Naive thymus-derived CD4-positive, alpha-beta T cell (primary cell): ENCODE measurements at regions of chr7 and their contacts with region 1.

Region 1: GRCh38 chr7:99558306-99559174 is at the start of gene ZNF655:
- DNase-seq: peak; percentile 85 to 96 (median 93)
- ATAC-seq: peak; percentile 89
- H3K4me3 ChIP-seq: peak within 1 kb of the TSS; percentile 85
- H3K4me3 Mint-ChIP-seq: peak within 1 kb of the TSS; percentile 94 to 100 (median 97)
- H3K27ac ChIP-seq: peak within 1 kb of the TSS; percentile 99
- H3K27ac Mint-ChIP-seq: peak within 1 kb of the TSS; percentile 95 to 100 (median 99)
- H3K4me1 ChIP-seq: peaks cover 24 to 25% of the 10 kb centered on the region in 2 donors
- H3K4me1 Mint-ChIP-seq: peaks cover 32 to 69% (median 51%) of the 10 kb centered on the region in 7 donors
- H3K27me3 ChIP-seq: no peaks in the 10 kb centered on the region
- H3K27me3 Mint-ChIP-seq: no peaks in the 10 kb centered on the region
- total RNA-seq, gene ZNF655: 110 to 165 (median 157) TPM

Region 2: DNA sequence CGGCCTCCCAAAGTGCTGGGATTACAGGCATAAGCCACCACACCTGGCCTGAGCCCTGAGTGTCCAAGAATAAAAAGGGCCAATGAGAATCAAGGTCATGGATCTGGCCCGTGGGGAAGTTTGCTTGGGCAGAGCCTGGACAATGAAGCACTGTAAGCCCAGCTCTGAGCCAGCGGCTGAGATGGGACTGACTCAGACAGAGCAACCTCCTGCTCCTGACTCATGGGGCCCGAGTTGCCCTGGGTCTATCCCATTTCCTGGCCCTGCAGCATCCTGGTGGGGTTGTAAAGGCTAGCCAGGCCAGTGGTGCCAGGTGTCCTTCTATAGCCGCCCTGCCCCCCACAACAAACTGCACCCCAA is 291.1 kb before region 1 on chr7:
- CTCF ChIA-PET with region 1: no interaction called
- POLR2A ChIA-PET with region 1: no interaction called
- intact Hi-C with region 1: no loop called
- DNase-seq: no peak
- ATAC-seq: no peak
- H3K4me3 ChIP-seq: no peak overlapping the region
- H3K4me3 Mint-ChIP-seq: no peak overlapping the region
- H3K27ac ChIP-seq: no peak overlapping the region
- H3K27ac Mint-ChIP-seq: no peak overlapping the region
- H3K4me1 ChIP-seq: no peaks in the 10 kb centered on the region
- H3K4me1 Mint-ChIP-seq: no peaks in the 10 kb centered on the region
- H3K27me3 ChIP-seq: no peaks in the 10 kb centered on the region
- H3K27me3 Mint-ChIP-seq: peaks cover 0 to 9% (median 5%) of the 10 kb centered on the region in 5 donors

Region 3: DNA sequence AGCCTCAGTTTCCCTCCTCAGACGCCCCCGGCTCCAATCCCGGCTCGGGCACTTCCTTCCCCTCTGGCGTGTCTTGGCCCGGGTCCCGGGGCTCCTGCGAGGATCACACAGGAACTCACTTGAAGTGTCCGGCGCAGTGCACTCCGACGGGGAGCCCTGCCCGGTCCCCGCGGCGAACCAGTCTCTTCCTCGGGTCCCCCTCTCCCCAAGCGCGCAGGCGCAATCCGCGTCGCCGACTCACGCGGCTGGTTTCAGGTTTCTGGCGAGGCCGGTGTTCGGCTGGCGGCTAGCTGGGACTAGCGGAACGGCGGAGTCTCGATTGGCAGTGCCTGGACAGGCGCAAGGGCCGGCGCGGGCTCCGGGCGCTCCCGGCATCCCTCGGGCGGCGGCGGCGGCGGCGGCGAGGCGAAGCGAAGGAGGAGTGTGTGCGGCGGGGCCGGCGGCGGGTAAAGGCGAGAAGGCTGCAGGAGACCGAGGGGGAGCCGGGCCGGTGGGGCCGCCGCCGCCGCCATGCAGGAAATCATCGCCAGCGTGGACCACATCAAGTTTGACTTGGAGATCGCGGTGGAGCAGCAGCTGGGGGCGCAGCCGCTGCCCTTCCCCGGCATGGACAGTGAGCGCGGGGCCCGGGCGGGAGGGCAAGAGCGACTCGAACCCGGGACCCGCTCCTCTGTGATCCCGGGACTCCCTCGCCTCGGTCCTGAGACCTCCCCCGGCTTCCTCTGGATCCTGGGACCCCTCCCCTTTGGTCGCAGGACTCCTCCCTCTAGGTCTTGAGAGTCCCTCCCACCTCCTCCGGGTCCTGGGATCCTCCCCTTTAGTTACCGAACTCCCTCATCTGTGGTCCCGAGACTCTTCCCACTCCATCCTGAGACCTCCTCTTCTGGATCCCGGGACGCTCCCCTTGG is 119.7 kb before region 1 on chr7 and contains the starts of genes CPSF4 and PTCD1:
- CTCF ChIA-PET with region 1: no interaction called
- POLR2A ChIA-PET with region 1: interaction called, 4 read pairs
- intact Hi-C with region 1: loop called in 1 of 2 experiments (anchors 1 kb)
- DNase-seq: peak; percentile 71 to 92 (median 77)
- ATAC-seq: peak; percentile 95
- H3K4me3 ChIP-seq: peak within 1 kb of the TSS; percentile 93
- H3K4me3 Mint-ChIP-seq: peak within 1 kb of the TSS; percentile 92 to 100 (median 98)
- H3K27ac ChIP-seq: peak within 1 kb of the TSS; percentile 81
- H3K27ac Mint-ChIP-seq: peak within 1 kb of the TSS; percentile 85 to 95 (median 94)
- H3K4me1 ChIP-seq: peaks cover 10 to 11% of the 10 kb centered on the region in 2 donors
- H3K4me1 Mint-ChIP-seq: peaks cover 18 to 40% (median 31%) of the 10 kb centered on the region in 7 donors
- H3K27me3 ChIP-seq: no peaks in the 10 kb centered on the region
- H3K27me3 Mint-ChIP-seq: no peaks in the 10 kb centered on the region
- total RNA-seq, gene CPSF4: 36.3 to 69.4 (median 45.7) TPM
- total RNA-seq, gene PTCD1: 4.0 to 10.8 (median 8.8) TPM

Region 4: DNA sequence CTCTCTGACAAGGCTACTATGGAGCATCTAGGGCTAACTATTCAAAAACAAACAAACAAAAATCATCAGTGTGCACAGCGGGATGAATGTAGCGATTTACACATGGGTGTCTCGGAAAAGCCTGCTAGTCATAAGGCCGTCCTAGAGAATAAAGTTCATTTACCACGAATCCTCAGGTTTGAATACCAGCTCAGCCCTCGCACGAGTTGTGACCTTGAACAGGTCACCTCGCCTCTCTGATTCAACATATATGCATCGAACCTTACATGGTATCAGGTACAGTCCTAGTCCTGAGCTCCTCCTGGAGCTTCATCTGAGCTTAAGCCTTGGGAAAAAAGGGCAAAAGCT is 93.1 kb before region 1 on chr7:
- CTCF ChIA-PET with region 1: no interaction called
- POLR2A ChIA-PET with region 1: interaction called, 12 read pairs
- intact Hi-C with region 1: no loop called
- DNase-seq: no peak
- ATAC-seq: peak; percentile 2
- H3K4me3 ChIP-seq: peak overlapping the region; percentile 97
- H3K4me3 Mint-ChIP-seq: peak overlapping the region; percentile 82 to 98 (median 96)
- H3K27ac ChIP-seq: peak overlapping the region; percentile 90
- H3K27ac Mint-ChIP-seq: peak overlapping the region; percentile 90 to 98 (median 96)
- H3K4me1 ChIP-seq: peaks cover 10 to 11% of the 10 kb centered on the region in 2 donors
- H3K4me1 Mint-ChIP-seq: peaks cover 19 to 52% (median 31%) of the 10 kb centered on the region in 7 donors
- H3K27me3 ChIP-seq: no peaks in the 10 kb centered on the region
- H3K27me3 Mint-ChIP-seq: peaks cover 0 to 2% (median 0%) of the 10 kb centered on the region in 5 donors

Region 5: DNA sequence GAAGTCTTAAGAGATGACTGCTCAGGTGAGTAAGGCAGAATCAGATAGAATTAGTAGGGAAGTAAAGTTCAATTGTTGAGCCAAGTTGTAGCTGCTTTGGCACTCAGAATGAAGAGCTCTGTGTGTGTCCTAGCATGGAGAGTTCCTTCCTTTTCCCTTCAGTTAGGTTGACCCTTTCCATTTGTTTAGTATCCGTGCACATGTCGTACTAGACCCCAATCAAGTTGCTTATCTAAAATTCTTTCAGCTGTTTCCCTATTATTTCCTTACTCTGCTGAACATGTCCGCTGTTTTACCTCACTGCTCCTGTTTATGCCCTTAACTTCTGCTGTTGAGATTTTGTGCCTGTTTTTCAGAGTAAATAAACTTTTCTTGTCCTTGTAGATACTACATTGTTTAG is 13.2 kb after region 1 on chr7:
- CTCF ChIA-PET with region 1: no interaction called
- POLR2A ChIA-PET with region 1: interaction called, 10 read pairs
- intact Hi-C with region 1: no loop called
- DNase-seq: no peak
- ATAC-seq: no peak
- H3K4me3 ChIP-seq: no peak overlapping the region
- H3K4me3 Mint-ChIP-seq: no peak overlapping the region
- H3K27ac ChIP-seq: no peak overlapping the region
- H3K27ac Mint-ChIP-seq: peak overlapping the region in 6 of 9 donors; percentile 13 to 71 (median 59)
- H3K4me1 ChIP-seq: no peaks in the 10 kb centered on the region
- H3K4me1 Mint-ChIP-seq: peaks cover 0 to 10% (median 6%) of the 10 kb centered on the region in 7 donors
- H3K27me3 ChIP-seq: no peaks in the 10 kb centered on the region
- H3K27me3 Mint-ChIP-seq: no peaks in the 10 kb centered on the region

Region 6: DNA sequence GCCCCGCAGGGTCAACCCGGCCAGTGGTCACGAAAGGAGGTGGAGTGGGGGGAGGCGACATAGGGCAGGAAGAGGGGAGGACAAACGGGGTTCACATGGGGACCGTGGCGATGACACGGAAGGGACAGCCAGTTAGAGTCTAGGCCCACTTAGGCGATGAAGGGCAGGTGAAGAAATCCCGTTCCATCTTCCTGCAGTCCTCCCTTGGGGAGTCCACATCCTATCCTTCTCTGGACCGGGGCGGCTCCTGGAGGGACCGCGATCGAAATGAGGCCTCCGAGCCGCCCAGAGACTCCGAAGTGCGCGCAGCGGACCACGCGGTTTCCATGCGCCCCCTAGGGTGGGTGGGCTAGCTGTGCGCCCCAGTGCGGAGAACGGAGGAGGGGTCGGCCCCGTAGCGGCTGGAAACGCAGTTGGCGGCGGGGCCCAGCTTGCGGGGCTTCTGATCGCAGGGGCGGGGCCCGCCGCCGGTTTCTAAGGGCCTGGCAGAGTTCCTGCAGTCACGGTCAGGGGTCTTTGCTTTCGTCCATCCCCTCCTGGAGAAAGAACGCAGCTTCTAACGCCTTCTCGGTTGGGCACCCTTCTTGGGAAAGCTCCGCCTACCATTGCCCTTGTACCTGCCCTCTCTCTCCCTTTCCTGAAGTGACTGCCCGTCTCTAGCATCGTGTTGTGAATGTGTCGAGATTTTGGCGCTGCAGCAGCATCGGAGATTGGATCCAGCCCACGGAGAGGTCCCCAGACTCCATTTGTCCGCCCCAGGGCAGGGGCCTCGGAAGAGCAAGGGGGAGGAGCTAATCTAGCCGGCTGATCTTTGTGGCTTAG is 21.6 kb after region 1 on chr7:
- CTCF ChIA-PET with region 1: interaction called, 3 read pairs
- POLR2A ChIA-PET with region 1: interaction called, 37 read pairs
- intact Hi-C with region 1: loop called in 1 of 2 experiments (anchors 1 kb)
- DNase-seq: peak; percentile 40 to 60 (median 53)
- ATAC-seq: peak; percentile 85
- H3K4me3 ChIP-seq: peak overlapping the region; percentile 77
- H3K4me3 Mint-ChIP-seq: peak overlapping the region; percentile 87 to 98 (median 94)
- H3K27ac ChIP-seq: peak overlapping the region; percentile 73
- H3K27ac Mint-ChIP-seq: peak overlapping the region; percentile 19 to 96 (median 86)
- H3K4me1 ChIP-seq: peaks cover 3 to 4% of the 10 kb centered on the region in 2 donors
- H3K4me1 Mint-ChIP-seq: peaks cover 0 to 24% (median 17%) of the 10 kb centered on the region in 7 donors
- H3K27me3 ChIP-seq: no peaks in the 10 kb centered on the region
- H3K27me3 Mint-ChIP-seq: peaks cover 0 to 3% (median 0%) of the 10 kb centered on the region in 5 donors

Region 7: GRCh38 chr7:99624484-99624883 is 65.9 kb after region 1 on chr7:
- CTCF ChIA-PET with region 1: no interaction called
- POLR2A ChIA-PET with region 1: interaction called, 15 read pairs
- intact Hi-C with region 1: no loop called
- DNase-seq: peak; percentile 34 to 89 (median 86)
- ATAC-seq: peak; percentile 96
- H3K4me3 ChIP-seq: peak overlapping the region; percentile 62
- H3K4me3 Mint-ChIP-seq: peak overlapping the region; percentile 83 to 95 (median 89)
- H3K27ac ChIP-seq: peak overlapping the region; percentile 89
- H3K27ac Mint-ChIP-seq: peak overlapping the region; percentile 91 to 100 (median 97)
- H3K4me1 ChIP-seq: peaks cover 23 to 30% of the 10 kb centered on the region in 2 donors
- H3K4me1 Mint-ChIP-seq: peaks cover 34 to 76% (median 60%) of the 10 kb centered on the region in 7 donors
- H3K27me3 ChIP-seq: no peaks in the 10 kb centered on the region
- H3K27me3 Mint-ChIP-seq: no peaks in the 10 kb centered on the region